ENCODE measurements at regions of chr3 and their contacts with region 1.

Region 1: GRCh38 chr3:131053043-131053859 is 26.6 kb downstream of the NEK11 start:
- DNase-seq: no peak
- ATAC-seq: no peak

Region 2: DNA sequence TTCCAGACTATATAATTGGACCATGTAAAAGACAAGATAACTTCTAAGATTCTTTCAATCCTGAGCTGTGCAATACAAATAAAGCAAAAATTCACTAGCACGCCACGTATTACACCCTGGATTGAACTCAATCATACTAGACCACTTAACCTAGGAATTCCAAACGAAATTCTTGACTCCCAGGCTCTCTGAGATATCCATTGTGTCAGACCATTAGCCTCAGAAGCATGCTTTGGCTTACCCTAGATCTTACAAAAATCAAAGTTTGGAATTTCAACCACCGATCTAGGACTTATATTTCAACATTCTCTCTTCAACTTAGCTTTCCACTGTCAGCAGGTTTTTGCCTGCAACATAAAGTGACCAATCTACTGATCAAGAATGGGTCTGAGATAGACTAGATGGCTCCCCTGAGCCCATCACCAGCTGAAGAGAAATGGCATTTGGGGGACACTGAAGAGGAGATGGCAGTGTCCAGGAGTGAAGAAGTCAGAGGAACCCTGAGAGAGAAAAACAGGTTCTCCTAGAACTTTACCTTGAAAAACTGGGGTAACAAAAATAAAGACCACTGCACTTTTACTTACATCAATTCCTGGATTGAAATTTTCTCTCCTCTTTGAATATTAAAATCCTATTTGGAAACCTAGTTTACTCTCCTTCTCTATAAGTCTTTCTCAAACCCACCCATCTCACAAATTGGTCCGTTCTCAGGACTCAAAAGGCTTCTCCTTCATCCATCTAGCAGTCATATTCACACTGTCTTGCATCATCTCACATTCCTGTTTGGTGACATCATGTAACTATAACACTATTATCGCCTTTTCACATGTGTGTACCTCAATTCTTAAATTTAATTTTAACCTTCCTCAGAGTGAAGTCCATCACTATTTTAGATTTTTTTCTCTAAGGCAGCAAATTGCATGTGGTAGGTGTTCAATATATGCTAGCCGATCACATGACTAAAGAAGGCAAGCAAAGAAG is 963.1 kb after region 1 on chr3:
- intact Hi-C with region 1: loop called in 1 of 2 experiments (anchors 10 kb)
- DNase-seq: no peak
- ATAC-seq: no peak

Region 3: GRCh38 chr3:132180337-132180791 is 1127.1 kb after region 1 on chr3:
- intact Hi-C with region 1: loop called in 1 of 2 experiments (anchors 10 kb)
- DNase-seq: no peak
- ATAC-seq: no peak